ENCODE measurements at regions of chr3 and their contacts with region 1.

Region 1: DNA sequence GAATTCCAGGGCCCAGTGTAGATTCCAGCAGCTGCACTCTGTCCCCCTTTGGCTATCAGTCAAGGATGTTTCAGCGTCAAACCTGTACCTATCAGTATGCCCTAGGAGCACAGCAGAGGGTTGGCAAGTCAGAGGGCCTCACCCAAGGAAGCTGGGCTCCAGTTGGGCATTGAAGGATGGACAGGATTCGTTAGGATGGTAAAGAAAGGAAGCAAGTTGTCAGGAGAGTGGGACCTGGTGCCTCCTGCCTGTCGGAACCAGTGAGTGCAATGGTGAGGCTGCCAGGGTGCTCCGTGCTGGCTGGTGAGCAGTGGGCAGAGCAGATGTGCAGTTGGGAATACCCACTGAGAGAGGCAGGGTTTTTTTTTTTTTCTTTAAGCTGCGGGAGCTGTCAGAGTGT is 157.2 kb downstream of the CHDH start:
- DNase-seq: no peak
- H3K4me3 Mint-ChIP-seq: no peak overlapping the region
- H3K27ac Mint-ChIP-seq: no peak overlapping the region
- H3K4me1 Mint-ChIP-seq: peaks cover 15% of the 10 kb centered on the region
- H3K27me3 Mint-ChIP-seq: peaks cover 21% of the 10 kb centered on the region

Region 2: GRCh38 chr3:53616321-53616720 is 72.7 kb before region 1 on chr3:
- CTCF ChIA-PET with region 1: no interaction called
- POLR2A ChIA-PET with region 1: no interaction called
- DNase-seq: no peak
- H3K4me3 Mint-ChIP-seq: no peak overlapping the region
- H3K27ac Mint-ChIP-seq: no peak overlapping the region
- H3K4me1 Mint-ChIP-seq: no peaks in the 10 kb centered on the region
- H3K27me3 Mint-ChIP-seq: peaks cover 29% of the 10 kb centered on the region

Region 3: DNA sequence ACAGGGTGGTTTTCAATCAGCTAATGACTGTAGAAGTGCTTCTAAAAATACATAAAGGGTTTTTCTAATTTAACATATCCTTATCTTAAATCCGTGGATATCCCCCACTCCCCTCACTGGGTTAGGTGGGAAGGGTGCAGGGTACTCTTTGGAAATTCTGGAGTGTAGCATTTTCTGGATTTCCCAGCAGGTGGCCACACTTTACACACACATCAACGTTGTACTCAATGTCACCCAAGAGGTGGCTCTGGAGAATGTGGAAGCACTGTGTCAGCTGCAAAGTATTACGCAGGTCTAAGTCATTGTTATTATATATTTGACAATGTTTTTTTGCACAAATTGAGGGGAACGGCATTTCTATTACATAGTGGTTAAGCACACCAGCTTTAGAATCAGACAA is 11.6 kb before region 1 on chr3:
- CTCF ChIA-PET with region 1: interaction called, 10 read pairs
- POLR2A ChIA-PET with region 1: no interaction called
- DNase-seq: no peak
- H3K4me3 Mint-ChIP-seq: no peak overlapping the region
- H3K27ac Mint-ChIP-seq: no peak overlapping the region
- H3K4me1 Mint-ChIP-seq: peaks cover 1% of the 10 kb centered on the region
- H3K27me3 Mint-ChIP-seq: peaks cover 38% of the 10 kb centered on the region